ENCODE measurements at regions of chr17 and their contacts with region 1.

Region 1: GRCh38 chr17:66715745-66716156 is 119.2 kb upstream of the CACNG5 start:
- DNase-seq: no peak
- H3K4me3 Mint-ChIP-seq: no peak overlapping the region
- H3K27ac Mint-ChIP-seq: peak overlapping the region; percentile 72
- H3K4me1 Mint-ChIP-seq: peaks cover 54% of the 10 kb centered on the region
- H3K27me3 Mint-ChIP-seq: no peaks in the 10 kb centered on the region

Region 2: DNA sequence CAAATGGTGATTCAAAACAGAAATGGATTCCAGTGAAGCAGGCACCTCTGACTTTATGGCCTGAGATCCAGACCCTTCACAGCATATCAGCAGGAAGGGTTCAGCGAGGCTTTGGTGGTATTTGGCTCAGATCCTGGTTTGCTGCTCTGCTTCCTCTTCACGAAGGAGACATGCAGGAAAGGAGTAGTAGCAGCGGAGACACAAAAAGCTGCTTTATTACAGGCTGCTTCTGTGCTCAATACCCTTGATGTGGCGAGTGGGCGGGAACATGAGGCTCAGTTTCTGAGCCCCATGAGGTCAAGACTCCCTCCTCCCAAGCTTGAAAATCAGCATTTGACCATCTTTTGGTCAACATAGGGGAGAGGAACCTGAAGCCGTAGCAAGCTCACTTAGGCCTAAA is 941.0 kb before region 1 on chr17:
- intact Hi-C with region 1: loop called (anchors 5 kb)
- DNase-seq: no peak
- H3K4me3 Mint-ChIP-seq: no peak overlapping the region
- H3K27ac Mint-ChIP-seq: no peak overlapping the region
- H3K4me1 Mint-ChIP-seq: peaks cover 5% of the 10 kb centered on the region
- H3K27me3 Mint-ChIP-seq: no peaks in the 10 kb centered on the region

Region 3: DNA sequence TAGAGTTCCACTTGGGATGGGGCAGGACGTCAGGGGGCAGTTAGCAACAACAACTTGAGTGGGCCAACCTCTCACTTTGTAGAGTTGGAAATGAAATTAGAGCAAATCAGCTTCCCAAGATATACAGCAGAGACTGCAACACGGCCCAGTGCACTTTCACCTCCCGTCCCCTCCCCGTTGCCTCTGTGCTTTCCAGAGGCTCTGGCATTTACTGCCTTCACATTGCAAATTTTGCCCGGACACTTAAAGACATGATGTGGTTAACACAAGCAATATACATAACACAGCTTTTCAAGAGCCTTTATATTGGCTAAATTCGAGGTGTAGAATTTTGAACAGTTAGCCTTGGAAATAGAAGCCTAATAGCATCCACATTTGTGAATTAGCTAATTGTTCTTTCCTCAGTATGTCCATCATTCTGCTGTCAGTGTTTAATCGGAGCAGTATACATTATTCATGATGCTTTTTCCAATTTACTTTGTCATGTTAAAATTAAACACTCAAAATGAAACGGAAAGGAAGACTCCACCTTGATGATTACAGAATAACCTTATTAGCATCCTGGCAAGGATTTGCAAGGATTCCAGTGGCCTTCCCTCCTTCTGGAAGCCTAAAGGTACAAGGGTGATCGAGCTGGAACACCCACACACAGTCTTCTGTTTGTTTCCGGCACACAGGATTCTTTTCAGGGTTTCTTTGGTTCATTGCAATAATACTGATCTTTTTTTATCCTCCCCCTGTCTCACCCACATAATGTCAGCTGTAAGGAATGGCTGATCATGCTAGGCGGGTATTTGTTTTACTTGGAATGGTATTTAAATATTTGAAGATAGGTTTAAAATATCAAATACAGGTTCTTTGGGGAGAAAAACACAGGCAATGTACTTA is 71.7 kb before region 1 on chr17:
- intact Hi-C with region 1: no loop called
- DNase-seq: no peak
- H3K4me3 Mint-ChIP-seq: no peak overlapping the region
- H3K27ac Mint-ChIP-seq: peak overlapping the region; percentile 18
- H3K4me1 Mint-ChIP-seq: peaks cover 21% of the 10 kb centered on the region
- H3K27me3 Mint-ChIP-seq: no peaks in the 10 kb centered on the region